GM10248 (cell line): ENCODE measurements at regions of chr5 and their contacts with region 1.

Region 1: DNA sequence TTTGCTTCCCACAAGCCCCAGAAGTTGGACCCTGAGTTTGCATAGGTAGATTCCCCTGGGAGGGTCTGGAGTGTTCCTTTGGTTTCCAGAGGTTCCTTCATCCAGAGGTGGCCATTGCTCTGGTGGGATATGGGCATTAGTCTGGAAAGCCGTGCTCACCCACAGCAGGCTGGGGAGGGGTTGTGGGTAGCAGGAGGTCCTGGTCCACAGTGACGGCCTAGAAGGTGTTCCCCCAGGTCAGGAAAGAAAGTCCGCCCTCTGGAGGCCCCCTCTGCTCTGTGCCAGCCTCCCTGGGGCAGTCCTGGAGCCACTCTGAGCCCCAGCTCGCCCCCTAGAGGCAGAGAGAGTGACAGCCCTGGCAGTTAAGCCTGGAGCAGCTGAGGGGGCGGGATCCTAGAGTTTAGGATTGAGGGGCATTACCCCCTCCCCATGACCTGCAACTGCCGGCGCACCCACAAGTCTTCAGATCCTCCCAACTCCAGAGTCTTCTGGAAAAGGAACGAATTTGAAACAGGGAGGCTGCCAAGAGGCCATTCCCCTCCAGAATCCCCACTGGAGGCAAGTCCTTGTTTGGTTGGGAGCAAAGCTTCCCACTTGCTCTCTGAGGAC is 36.8 kb downstream of the NDST1 start:
- DNase-seq: peak; percentile 95
- CTCF ChIP-seq: peak; percentile 98

Region 2: GRCh38 chr5:150529555-150529954 is 15.2 kb before region 1 on chr5:
- CTCF ChIA-PET with region 1: interaction called, 48 read pairs
- POLR2A ChIA-PET with region 1: no interaction called
- DNase-seq: no peak
- CTCF ChIP-seq: no peak

Region 3: DNA sequence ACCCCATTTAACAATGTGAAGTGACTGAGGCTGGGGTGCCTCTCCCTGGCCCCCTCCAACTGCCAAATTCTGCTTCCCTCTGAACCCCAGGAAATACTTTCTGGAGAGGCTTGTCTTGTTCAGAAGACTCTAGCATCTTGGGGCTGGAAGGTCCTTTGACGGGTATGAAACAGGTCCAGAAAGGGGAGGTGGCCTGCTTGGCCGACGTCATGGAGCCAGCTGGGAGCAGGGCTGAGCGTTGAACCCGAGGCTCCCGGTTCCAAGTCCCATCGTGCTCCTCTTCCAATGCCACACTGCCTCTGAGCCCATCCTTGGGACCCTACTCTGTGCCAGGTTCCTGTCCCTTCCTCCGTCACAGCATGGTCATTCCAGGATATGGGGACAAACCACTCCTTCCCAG is 10.1 kb after region 1 on chr5:
- CTCF ChIA-PET with region 1: interaction called, 35 read pairs
- POLR2A ChIA-PET with region 1: no interaction called
- DNase-seq: no peak
- CTCF ChIP-seq: no peak